ENCODE measurements at regions of chr9 and their contacts with region 1.

Region 1: DNA sequence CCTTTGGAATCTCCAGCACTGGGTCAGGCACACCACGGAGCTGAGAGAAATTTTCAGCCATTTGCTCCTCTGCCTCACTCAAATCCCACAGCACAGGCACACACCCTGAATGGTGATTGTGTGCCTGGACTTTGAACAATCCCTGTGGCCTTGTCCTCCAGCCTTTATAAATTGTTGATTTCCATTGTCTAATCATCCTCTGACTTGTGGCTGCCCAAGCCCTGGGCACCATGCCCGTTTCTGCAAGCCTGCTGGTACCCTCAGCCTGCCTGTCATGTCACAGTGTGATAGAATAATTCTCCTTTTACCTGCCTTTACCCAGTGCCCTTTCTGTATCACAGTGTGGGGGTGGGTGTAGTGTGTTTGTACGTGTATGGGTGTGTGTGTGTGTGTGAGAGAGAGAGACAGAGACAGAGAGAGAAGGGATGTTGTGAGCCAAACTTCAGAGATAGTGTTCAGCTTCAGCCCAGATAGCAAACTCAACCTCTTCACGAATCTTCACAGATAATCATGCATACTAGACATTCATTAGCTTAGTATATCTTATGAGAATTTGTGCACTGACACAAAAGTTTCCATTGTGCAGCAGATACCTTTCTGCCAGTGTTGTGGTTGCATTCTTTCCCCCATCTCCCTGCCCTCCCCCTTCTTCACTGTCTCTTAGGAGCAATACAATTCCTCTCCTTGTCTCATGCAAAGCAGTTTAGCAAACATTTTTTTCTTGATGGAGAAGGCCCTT is 27.8 kb upstream of the SLC44A1 start:
- DNase-seq: no peak
- H3K4me3 ChIP-seq: no peak overlapping the region
- H3K27ac ChIP-seq: no peak overlapping the region
- H3K4me1 ChIP-seq: no peaks in the 10 kb centered on the region
- CTCF ChIP-seq: no peak

Region 2: DNA sequence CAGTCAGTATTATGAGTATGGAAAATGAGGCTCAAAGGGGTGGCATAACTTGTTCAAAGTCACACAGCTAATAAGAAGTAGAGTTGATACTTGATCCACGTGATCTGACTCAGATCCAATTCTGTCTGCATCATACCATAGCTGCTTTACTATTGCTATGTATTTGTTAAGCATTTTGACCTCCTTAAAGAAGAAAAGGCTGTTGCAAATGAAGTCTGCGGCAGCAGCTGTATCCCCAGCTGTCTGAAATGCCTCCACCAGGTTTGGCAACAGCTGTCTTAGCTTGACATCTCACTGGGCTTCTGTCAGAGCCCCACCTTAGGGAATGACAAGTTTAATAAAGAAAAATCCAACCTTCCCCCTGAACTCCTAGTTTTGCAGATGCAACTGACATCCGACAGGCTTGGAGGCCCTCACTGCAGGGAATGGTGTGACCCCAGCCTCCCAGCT is 47.7 kb before region 1 on chr9:
- CTCF ChIA-PET with region 1: no interaction called
- POLR2A ChIA-PET with region 1: no interaction called
- intact Hi-C with region 1: loop called (anchors 5 kb)
- DNase-seq: no peak
- H3K4me3 ChIP-seq: no peak overlapping the region
- H3K27ac ChIP-seq: no peak overlapping the region
- H3K4me1 ChIP-seq: no peaks in the 10 kb centered on the region
- CTCF ChIP-seq: no peak

Measured in OCI-LY7 (cell line).